ENCODE measurements at regions of chr12 and their contacts with region 1.

Region 1: GRCh38 chr12:110937104-110937641 is 16.8 kb upstream of the MYL2 start:
- DNase-seq: peak in 4 of 5 donors; percentile 50 to 82 (median 63)
- ATAC-seq: peak in 3 of 4 donors; percentile 49 to 54 (median 54)
- H3K4me3 ChIP-seq: peak overlapping the region in 7 of 12 donors; percentile 7 to 37 (median 27)
- H3K27ac ChIP-seq: peak overlapping the region in 3 of 12 donors; percentile 19 to 71 (median 47)
- H3K4me1 ChIP-seq: peaks cover 0 to 15% (median 5%) of the 10 kb centered on the region in 12 donors
- H3K27me3 ChIP-seq: peaks cover 0 to 15% (median 4%) of the 10 kb centered on the region in 9 donors
- CTCF ChIP-seq: peak; percentile 87 to 98 (median 94)
- POLR2A ChIP-seq: no peak

Region 2: DNA sequence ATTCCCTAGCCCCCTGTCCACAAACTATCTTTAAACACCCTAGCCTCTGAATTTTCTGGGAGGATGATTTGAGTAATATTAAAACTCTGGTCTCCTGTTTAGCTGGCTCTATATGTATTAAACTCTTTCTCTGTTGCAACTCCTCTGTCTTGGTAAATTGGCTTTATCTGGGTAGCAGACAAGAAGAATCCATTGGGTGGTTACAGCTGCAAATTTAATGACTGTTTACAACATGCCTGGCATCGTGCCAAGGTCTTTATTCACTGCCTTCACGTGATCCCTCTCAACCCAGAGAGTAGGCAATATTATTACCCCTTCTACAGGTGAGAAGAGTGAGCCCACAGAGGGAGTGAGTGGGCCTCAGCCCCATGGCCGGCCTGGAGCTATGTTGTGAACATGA is 61.0 kb after region 1 on chr12:
- intact Hi-C with region 1: loop called in 4 of 10 experiments (anchors 5 to 10 kb)
- DNase-seq: no peak
- ATAC-seq: no peak
- H3K4me3 ChIP-seq: no peak overlapping the region
- H3K27ac ChIP-seq: no peak overlapping the region
- H3K4me1 ChIP-seq: peaks cover 0 to 11% (median 0%) of the 10 kb centered on the region in 12 donors
- H3K27me3 ChIP-seq: peaks cover 0 to 6% (median 0%) of the 10 kb centered on the region in 9 donors
- CTCF ChIP-seq: no peak
- POLR2A ChIP-seq: no peak

Region 3: DNA sequence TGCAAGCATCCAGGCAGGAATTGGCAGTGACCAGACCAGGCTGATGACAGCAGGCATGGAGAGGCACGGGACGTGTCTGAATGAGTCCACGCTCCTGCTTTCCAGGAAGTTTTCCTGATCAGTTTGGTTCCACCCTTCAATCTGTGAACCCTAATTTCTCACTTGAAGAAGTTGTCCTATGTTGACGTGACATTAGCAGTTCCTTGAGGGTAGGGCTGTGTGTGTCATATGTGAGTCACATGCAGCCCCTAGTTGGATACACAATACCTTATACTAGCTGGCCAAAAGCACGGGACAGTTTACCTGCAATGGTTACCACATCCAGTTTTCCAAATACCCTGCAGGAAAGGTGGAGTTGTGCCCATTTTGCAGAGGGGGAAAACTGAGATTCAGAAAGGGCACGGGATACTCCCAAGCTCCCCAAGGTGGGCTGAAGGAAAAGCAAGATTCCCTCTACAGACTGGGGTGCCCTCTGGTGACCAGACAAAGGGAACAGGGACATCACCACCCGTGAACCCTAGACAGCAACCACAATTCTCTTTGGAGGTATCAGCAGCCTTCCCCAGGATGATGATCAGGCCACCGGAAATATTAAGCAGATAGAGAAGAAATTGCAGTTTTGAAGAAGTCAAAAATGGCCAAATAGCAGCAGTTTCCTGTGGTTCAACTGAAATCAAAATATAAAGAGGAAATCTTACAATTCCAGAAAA is 237.2 kb after region 1 on chr12:
- intact Hi-C with region 1: loop called in 2 of 10 experiments (anchors 5 to 10 kb)
- DNase-seq: no peak
- ATAC-seq: peak in 3 of 4 donors; percentile 29 to 49 (median 47)
- H3K4me3 ChIP-seq: no peak overlapping the region
- H3K27ac ChIP-seq: no peak overlapping the region
- H3K4me1 ChIP-seq: peaks cover 0 to 39% (median 0%) of the 10 kb centered on the region in 12 donors
- H3K27me3 ChIP-seq: peaks cover 0 to 5% (median 0%) of the 10 kb centered on the region in 9 donors
- CTCF ChIP-seq: peak in 8 of 12 donors; percentile 10 to 38 (median 20)
- POLR2A ChIP-seq: no peak

Region 4: DNA sequence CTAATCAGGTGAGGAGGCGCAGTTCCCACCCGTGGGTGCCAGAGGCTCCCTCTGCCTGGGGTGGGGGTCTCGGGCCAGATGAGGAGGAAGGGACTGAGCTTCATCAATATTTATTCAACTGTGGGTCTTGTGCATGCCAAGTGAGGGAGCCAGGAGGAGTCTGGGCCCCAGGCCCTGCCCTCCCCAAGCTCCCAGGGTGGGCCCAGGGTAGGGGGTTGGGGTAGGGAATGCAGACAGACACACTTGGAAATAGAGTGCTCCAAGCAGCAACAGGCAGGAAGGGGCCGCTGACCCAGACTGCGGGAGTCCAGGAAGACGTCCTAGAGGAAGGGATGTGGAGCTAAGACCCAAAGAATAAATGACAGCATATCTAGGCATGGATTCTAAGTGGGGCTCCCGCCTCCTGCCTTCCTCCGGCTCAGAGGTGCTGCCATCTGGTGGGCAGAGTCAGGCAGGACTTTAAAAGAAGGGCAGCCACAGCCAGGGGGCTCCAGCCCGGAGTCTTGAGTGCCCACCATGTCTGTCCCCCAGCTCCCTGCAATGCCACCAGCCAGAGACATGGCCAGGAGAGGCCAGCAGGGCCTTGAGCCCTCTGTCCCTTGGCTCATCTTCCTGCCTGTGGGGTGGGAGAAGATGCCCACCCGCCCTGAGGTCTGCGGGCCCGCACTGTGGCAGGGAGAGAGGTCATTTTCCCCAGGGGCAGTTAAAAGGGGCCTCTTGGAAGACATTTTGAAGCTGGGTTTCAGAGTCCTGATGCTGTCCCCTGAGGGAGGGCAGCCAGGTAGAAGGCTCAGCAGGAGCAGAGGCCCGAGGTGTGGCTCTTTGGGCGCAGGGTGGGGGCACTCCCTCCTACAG is 361.6 kb after region 1 on chr12:
- intact Hi-C with region 1: loop called in 9 of 10 experiments (anchors 2 to 5 kb)
- DNase-seq: peak in 4 of 5 donors; percentile 27 to 54 (median 40)
- ATAC-seq: peak in 3 of 4 donors; percentile 72 to 74 (median 72)
- H3K4me3 ChIP-seq: no peak overlapping the region
- H3K27ac ChIP-seq: no peak overlapping the region
- H3K4me1 ChIP-seq: no peaks in the 10 kb centered on the region
- H3K27me3 ChIP-seq: no peaks in the 10 kb centered on the region
- CTCF ChIP-seq: peak; percentile 61 to 87 (median 76)
- POLR2A ChIP-seq: no peak

Region 5: GRCh38 chr12:111313833-111314259 is 376.7 kb after region 1 on chr12:
- intact Hi-C with region 1: loop called (anchors 2 to 5 kb)
- DNase-seq: peak; percentile 56 to 87 (median 71)
- ATAC-seq: peak; percentile 24 to 81 (median 74)
- H3K4me3 ChIP-seq: peak overlapping the region in 2 of 12 donors; percentile 4 to 41
- H3K27ac ChIP-seq: no peak overlapping the region
- H3K4me1 ChIP-seq: peaks cover 0 to 24% (median 0%) of the 10 kb centered on the region in 12 donors
- H3K27me3 ChIP-seq: peaks cover 0 to 3% (median 0%) of the 10 kb centered on the region in 9 donors
- CTCF ChIP-seq: peak; percentile 82 to 94 (median 92)
- POLR2A ChIP-seq: no peak

Measured in heart left ventricle (tissue), 16 donors.